Left lung (tissue), 14 donors: ENCODE measurements at regions of chr18 and their contacts with region 1.

Region 1: GRCh38 chr18:26397019-26397418 is 151.3 kb downstream of the KCTD1 start:
- DNase-seq: no peak
- ATAC-seq: no peak
- H3K4me3 ChIP-seq: no peak overlapping the region
- H3K27ac ChIP-seq: no peak overlapping the region
- H3K4me1 ChIP-seq: no peaks in the 10 kb centered on the region
- H3K27me3 ChIP-seq: no peaks in the 10 kb centered on the region
- CTCF ChIP-seq: no peak

Region 2: DNA sequence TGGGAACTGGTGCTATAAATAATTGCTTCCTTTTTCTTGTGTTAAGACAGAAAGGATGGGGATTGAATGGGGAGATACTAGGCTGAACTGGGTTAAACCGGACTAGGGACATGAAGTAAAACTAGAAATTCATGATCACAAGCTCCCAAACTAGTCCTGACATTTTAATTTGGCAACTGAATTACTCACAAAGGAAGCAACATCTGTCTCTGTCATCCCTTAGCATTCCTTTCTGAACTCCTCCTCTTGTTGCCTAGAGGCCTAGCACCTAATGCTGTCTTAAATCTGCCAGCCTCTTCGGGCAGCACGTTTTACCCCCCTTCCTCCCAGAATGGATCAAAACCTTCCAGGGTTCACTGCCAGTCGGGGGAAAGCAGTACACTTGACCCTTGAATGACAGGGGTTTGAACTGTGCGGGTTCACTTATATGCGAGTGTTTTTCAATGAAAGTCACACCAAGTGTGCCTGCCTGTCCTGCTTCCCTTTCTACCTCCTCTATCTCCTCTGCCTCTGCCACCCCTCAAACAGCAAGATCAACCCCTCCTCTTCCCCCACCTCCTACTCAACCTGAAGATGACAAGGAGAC is 143.1 kb after region 1 on chr18:
- intact Hi-C with region 1: no loop called
- DNase-seq: no peak
- ATAC-seq: no peak
- H3K4me3 ChIP-seq: no peak overlapping the region
- H3K27ac ChIP-seq: no peak overlapping the region
- H3K4me1 ChIP-seq: peaks cover 0 to 6% of the 10 kb centered on the region in 2 donors
- H3K27me3 ChIP-seq: no peaks in the 10 kb centered on the region
- CTCF ChIP-seq: no peak

Region 3: GRCh38 chr18:26642440-26643348 is 245.7 kb after region 1 on chr18:
- intact Hi-C with region 1: loop called in 1 of 2 experiments (anchors 10 kb)
- DNase-seq: no peak
- ATAC-seq: peak; percentile 35
- H3K4me3 ChIP-seq: no peak overlapping the region
- H3K27ac ChIP-seq: peak overlapping the region in 1 of 2 donors; percentile 23
- H3K4me1 ChIP-seq: peaks cover 0 to 8% of the 10 kb centered on the region in 2 donors
- H3K27me3 ChIP-seq: peaks cover 0 to 9% of the 10 kb centered on the region in 2 donors
- CTCF ChIP-seq: no peak